ENCODE measurements at regions of chr17 and their contacts with region 1.

Region 1: DNA sequence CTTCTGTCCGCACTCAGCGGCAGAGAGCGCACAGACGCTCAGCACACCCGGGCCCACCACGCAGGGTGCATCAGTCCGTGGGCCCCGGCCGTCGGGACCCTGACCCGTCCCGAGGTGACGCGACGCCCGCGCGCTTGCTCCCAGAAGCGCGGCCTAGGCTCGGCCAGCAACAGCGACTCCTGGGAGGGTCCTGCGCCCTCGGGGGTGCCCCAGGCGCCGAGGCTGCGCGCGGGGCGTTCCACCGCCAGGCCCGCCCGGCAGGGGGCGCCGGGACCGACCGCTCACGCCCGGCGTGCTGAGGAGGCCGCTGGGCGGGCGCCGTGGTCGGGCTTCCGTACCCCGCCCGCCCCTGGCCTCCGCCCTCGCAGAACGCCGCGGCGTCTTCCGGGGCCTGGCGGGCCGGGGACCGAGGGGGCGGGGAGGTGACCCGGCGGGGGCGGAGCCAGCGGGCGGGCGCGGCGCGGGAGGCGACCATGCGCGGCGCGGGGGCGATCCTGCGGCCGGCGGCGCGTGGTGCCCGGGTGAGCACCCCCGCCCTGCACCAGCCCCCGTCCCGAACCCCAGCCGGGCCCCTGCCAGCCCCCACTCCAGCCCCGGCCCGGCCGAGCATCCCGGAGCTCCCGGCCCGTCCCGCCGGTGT is at the start of gene CISD3:
- DNase-seq: peak; percentile 82 to 89 (median 87)
- H3K4me3 ChIP-seq: peak within 1 kb of the TSS; percentile 67 to 83
- H3K4me3 Mint-ChIP-seq: peak within 1 kb of the TSS; percentile 92 to 99 (median 97)
- H3K27ac ChIP-seq: peak within 1 kb of the TSS; percentile 72
- H3K27ac Mint-ChIP-seq: peak within 1 kb of the TSS; percentile 94 to 99 (median 97)
- H3K4me1 ChIP-seq: peaks cover 87% of the 10 kb centered on the region
- H3K4me1 Mint-ChIP-seq: peaks cover 45 to 93% (median 71%) of the 10 kb centered on the region in 4 donors
- H3K27me3 ChIP-seq: no peaks in the 10 kb centered on the region
- H3K27me3 Mint-ChIP-seq: no peaks in the 10 kb centered on the region
- total RNA-seq, gene CISD3: 12.5 to 13.5 TPM

Region 2: DNA sequence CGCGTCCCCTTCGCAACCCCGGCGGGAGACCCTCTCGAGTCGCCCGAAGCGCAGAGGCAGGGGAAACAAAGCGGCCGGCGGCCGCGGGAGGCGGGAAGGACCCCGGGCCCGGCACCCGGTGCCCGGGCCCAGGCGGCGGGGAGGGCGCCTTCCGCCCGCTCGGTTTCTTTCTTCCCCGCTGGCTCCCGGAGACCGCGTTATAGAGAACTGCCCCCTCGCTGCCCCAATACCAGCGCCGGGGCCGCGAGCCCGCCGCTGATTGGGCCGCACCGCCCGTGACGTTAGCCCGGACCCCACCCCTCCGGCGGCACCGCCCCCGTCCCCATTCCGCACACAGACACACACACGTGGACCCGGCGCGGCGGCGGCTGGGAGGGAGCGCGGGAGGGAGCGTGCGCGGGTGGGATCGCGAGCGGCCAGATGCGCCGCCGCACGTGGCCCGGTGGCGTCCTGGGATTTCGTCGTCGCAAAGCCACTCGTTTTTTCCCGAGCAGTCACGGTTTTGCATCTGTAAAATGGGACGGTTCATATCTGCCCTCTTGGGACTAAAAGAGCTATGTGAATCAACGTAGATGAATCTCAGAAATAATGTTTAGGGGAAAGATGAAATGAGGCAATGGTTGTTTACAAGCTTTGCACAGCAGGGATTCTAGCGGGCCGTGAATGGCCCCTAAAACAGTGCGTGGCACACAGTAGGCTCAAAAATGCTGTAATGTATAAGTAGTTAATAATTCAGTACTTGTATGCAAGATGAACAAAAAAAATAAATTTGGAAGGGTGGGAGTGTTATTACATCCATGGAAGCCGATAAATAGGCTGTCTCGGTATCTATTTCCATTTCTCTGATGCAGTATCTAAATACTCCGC is 55.0 kb before region 1 on chr17 and contains the start of gene EPOP:
- CTCF ChIA-PET with region 1: interaction called, 198 read pairs
- POLR2A ChIA-PET with region 1: interaction called, 38 read pairs
- intact Hi-C with region 1: loop called (anchors 1 kb)
- DNase-seq: peak; percentile 68 to 82 (median 74)
- H3K4me3 ChIP-seq: peak within 1 kb of the TSS in 1 of 2 donors; percentile 52
- H3K4me3 Mint-ChIP-seq: peak within 1 kb of the TSS; percentile 39 to 82 (median 73)
- H3K27ac ChIP-seq: peak within 1 kb of the TSS; percentile 9
- H3K27ac Mint-ChIP-seq: peak within 1 kb of the TSS in 4 of 7 donors; percentile 31 to 47 (median 40)
- H3K4me1 ChIP-seq: peaks cover 11% of the 10 kb centered on the region
- H3K4me1 Mint-ChIP-seq: peaks cover 5 to 25% (median 11%) of the 10 kb centered on the region in 4 donors
- H3K27me3 ChIP-seq: peaks cover 12% of the 10 kb centered on the region
- H3K27me3 Mint-ChIP-seq: peaks cover 17 to 30% of the 10 kb centered on the region in 2 donors
- total RNA-seq, gene EPOP: 0.09 to 0.25 TPM

Region 3: GRCh38 chr17:38713456-38714075 is 16.4 kb before region 1 on chr17:
- CTCF ChIA-PET with region 1: interaction called, 34 read pairs
- POLR2A ChIA-PET with region 1: interaction called, 588 read pairs
- intact Hi-C with region 1: no loop called
- DNase-seq: no peak
- H3K4me3 ChIP-seq: no peak overlapping the region
- H3K4me3 Mint-ChIP-seq: no peak overlapping the region
- H3K27ac ChIP-seq: no peak overlapping the region
- H3K27ac Mint-ChIP-seq: peak overlapping the region in 3 of 7 donors; percentile 8 to 78 (median 42)
- H3K4me1 ChIP-seq: peaks cover 21% of the 10 kb centered on the region
- H3K4me1 Mint-ChIP-seq: peaks cover 7 to 56% (median 17%) of the 10 kb centered on the region in 4 donors
- H3K27me3 ChIP-seq: no peaks in the 10 kb centered on the region
- H3K27me3 Mint-ChIP-seq: no peaks in the 10 kb centered on the region

Region 4: DNA sequence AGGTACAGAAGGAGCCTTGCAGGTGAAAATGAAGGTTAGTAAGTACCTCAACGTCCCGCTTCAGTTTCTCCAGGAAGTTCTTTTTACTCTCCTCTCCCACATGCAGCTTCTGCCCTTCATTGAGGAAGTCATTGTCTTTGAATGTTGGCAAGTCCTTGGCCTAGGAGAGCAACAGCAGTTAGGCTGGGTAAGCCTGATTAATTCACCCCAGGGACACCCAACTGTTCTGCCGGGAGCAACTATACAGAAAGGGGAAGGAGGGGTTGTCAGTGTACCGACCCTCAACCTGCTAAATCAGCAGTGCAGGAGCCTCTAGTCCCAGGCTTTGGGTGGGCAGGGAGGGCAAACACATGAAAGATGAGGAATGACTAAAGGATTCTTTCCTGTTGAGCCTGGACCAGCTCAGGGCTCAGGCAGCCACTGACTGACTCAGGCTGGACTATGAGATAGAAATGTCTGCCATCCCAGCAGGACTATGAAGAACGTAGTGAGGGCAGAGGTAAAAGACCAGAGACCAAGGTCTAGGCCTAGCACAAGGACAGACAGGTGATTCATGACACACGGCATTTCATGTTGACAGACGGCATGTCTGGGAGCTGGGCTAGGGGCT is 47.7 kb after region 1 on chr17:
- CTCF ChIA-PET with region 1: no interaction called
- POLR2A ChIA-PET with region 1: no interaction called
- intact Hi-C with region 1: no loop called
- DNase-seq: no peak
- H3K4me3 ChIP-seq: no peak overlapping the region
- H3K4me3 Mint-ChIP-seq: no peak overlapping the region
- H3K27ac ChIP-seq: no peak overlapping the region
- H3K27ac Mint-ChIP-seq: peak overlapping the region in 2 of 7 donors; percentile 7 to 47
- H3K4me1 ChIP-seq: no peaks in the 10 kb centered on the region
- H3K4me1 Mint-ChIP-seq: peaks cover 0 to 2% (median 0%) of the 10 kb centered on the region in 4 donors
- H3K27me3 ChIP-seq: no peaks in the 10 kb centered on the region
- H3K27me3 Mint-ChIP-seq: no peaks in the 10 kb centered on the region